Panc1 (cell line): ENCODE measurements at regions of chr15 and their contacts with region 1.

Region 1: DNA sequence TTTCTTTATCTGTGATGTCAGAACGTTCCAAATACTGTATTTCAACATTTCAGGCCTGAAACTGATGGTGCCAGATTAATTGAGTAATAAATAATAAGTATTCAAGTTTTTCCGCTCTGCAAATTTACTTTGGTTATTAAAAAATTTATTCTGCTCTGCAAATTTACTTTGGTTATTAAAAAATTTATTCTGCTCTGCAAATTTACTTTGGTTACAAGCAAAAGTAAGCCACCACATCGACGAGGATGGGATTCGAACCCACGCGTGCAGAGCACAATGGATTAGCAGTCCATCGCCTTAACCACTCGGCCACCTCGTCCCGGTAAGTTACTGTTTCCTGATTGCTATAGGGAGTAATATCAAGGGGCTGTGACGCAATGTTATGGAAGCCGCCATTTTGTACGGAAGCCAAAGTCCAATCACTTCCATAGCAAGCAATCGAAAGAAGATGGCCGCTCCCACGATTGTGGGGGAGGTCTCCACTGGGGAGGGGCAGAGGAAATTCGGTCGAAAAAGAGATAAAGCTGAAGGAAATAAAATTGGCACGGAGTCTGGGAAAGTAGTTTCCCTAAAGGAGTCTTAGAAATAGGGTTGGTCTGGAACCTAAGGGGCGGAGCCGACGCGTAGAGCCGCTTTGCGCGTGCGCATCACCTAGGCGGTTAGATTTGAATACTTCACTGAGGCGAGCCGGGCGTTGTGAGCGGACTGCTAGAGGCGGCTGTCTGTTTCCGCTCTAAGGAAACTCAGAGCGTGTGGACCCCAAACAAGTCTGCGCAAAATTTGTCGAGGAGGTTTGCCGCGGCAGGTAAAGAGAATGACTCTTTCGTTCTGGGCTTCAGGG is at the start of gene KNL1:
- DNase-seq: peak; percentile 99
- ATAC-seq: peak; percentile 88
- H3K4me3 ChIP-seq: peak within 1 kb of the TSS; percentile 68 to 77
- H3K27ac ChIP-seq: peak within 1 kb of the TSS; percentile 97
- H3K4me1 ChIP-seq: peaks cover 29% of the 10 kb centered on the region
- H3K27me3 ChIP-seq: no peaks in the 10 kb centered on the region
- CTCF ChIP-seq: no peak
- total RNA-seq, gene KNL1: 28.9 TPM

Region 2: GRCh38 chr15:40440743-40441564 is 152.9 kb before region 1 on chr15 and contains the start of gene BAHD1:
- CTCF ChIA-PET with region 1: no interaction called
- POLR2A ChIA-PET with region 1: interaction called, 10 read pairs
- in situ Hi-C with region 1: no loop called
- intact Hi-C with region 1: no loop called
- DNase-seq: peak; percentile 54
- ATAC-seq: peak; percentile 86
- H3K4me3 ChIP-seq: peak within 1 kb of the TSS; percentile 65 to 80
- H3K27ac ChIP-seq: peak within 1 kb of the TSS; percentile 91
- H3K4me1 ChIP-seq: peaks cover 66% of the 10 kb centered on the region
- H3K27me3 ChIP-seq: no peaks in the 10 kb centered on the region
- CTCF ChIP-seq: peak; percentile 52; the same call in 1 of the 2 replicates
- total RNA-seq, gene BAHD1: 40.6 TPM

Region 3: DNA sequence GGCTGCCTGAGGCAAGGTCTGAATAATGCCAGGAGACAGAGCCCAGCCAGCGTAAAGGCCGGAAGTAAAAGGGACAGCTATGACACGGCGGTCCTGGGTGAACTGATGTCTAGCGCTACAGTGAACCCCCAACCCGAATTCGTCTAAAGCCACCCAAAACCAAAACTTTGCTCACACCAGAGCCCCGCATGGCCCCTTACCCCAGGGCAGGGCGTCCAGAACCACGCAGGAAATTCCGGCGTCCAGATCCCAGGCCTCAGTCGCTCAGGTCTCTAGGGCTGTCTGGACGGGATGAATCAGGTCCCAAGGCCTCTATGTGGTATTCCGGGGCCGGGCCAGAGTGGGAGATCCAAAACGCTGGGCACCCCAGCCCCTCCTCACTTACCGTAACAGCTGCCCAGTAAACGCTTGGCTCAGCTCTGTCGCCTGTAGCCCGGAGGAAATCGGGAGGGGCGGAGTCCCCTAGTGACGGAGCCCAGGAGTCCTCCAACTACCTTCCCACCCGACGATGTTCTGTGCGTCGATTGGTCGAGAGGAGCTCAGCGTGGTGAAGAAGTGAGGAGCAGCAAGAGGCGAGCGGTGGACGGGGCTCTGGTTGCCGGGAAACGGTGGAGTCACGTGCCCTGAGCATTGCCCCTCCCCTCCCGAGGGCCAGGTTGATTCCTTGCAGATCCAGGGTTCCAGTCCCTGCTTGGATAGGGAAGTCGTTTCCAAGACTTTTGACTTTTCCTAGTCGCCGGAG is 29.0 kb before region 1 on chr15 and contains the start of gene CCDC32:
- CTCF ChIA-PET with region 1: interaction called, 17 read pairs
- POLR2A ChIA-PET with region 1: interaction called, 11 read pairs
- in situ Hi-C with region 1: no loop called
- intact Hi-C with region 1: no loop called
- DNase-seq: peak; percentile 96
- ATAC-seq: peak; percentile 98
- H3K4me3 ChIP-seq: peak within 1 kb of the TSS; percentile 78 to 95
- H3K27ac ChIP-seq: peak within 1 kb of the TSS; percentile 92
- H3K4me1 ChIP-seq: peaks cover 4% of the 10 kb centered on the region; the same call in 1 of the 2 replicates
- H3K27me3 ChIP-seq: no peaks in the 10 kb centered on the region
- CTCF ChIP-seq: no peak
- total RNA-seq, gene CCDC32: 29.8 TPM

Region 4: DNA sequence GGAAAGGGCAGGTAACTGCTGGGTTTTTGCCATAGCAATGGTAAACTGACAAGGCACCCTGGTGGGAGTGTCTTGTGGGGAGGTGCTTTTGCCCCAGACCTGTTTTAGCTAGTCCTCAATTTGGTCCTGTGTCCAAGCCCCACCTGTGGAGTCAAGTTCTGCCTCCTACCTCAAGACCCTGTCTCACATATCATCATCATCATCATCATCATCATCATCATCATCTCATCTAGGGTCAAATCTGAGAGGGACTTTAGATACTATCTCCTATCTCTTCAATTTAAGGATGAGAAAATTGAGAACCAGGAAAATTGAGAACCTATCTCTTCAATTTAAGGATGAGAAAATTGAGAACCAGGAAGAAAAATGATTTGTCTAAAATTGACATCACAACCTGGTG is 10.1 kb after region 1 on chr15:
- CTCF ChIA-PET with region 1: interaction called, 12 read pairs
- POLR2A ChIA-PET with region 1: no interaction called
- in situ Hi-C with region 1: no loop called
- intact Hi-C with region 1: no loop called
- DNase-seq: no peak
- ATAC-seq: no peak
- H3K4me3 ChIP-seq: no peak overlapping the region
- H3K27ac ChIP-seq: no peak overlapping the region
- H3K4me1 ChIP-seq: no peaks in the 10 kb centered on the region
- H3K27me3 ChIP-seq: no peaks in the 10 kb centered on the region
- CTCF ChIP-seq: no peak

Region 5: GRCh38 chr15:40633143-40633542 is 39.3 kb after region 1 on chr15:
- CTCF ChIA-PET with region 1: interaction called, 12 read pairs
- POLR2A ChIA-PET with region 1: no interaction called
- in situ Hi-C with region 1: no loop called
- intact Hi-C with region 1: no loop called
- DNase-seq: no peak
- ATAC-seq: peak; percentile 75
- H3K4me3 ChIP-seq: no peak overlapping the region
- H3K27ac ChIP-seq: no peak overlapping the region
- H3K4me1 ChIP-seq: peaks cover 3% of the 10 kb centered on the region; the same call in 1 of the 2 replicates
- H3K27me3 ChIP-seq: no peaks in the 10 kb centered on the region
- CTCF ChIP-seq: no peak

Region 6: DNA sequence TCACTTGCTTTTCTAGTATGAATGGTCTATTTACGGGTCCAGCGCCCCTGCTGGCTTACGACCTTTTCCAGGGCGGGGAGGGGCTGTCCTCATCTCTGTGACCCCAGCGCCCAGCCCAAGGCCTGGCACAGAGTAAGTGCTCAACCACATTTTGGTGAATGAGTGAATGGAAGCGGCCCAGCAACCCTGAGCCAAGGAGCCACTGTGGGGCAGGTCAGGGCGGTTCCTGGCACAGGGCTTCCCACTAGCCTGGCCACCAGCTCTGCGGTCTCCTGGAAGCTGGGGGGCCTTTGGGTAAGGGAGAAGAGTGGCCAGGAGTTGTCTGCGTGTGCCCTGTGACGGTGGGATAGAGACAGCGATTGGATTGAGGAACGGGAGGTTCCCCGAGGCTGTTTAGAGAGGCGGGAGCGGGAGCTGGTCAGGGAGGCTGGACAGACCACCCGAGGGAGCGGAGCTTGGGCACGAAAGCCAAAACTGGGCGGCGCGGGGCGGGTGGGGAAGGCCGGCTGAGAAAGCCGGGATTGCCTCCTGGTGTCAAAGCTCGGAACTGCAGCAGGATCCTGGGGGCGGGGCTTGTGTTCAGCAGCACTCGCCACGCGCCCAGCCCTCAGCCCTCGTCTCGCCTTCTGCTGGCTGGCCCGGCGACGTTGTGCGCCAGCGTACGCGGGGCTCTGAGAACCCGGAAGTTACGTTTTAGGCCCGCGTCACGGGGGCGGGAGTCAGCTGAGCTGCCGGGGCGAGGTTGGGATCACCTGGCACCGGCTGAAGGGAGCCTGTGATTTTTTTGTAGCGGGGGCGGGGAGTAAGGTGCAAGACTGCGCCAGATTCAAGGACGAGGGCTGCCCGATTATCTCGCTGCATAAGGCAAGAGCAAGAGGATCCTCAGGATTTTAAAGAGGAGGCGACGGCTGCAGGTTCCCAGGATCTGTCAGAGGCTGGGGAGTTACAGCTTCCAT is 300.2 kb after region 1 on chr15 and contains the start of gene VPS18:
- CTCF ChIA-PET with region 1: no interaction called
- POLR2A ChIA-PET with region 1: interaction called, 10 read pairs
- in situ Hi-C with region 1: no loop called
- intact Hi-C with region 1: no loop called
- DNase-seq: peak; percentile 82
- ATAC-seq: peak; percentile 97
- H3K4me3 ChIP-seq: peak within 1 kb of the TSS; percentile 94 to 97
- H3K27ac ChIP-seq: peak within 1 kb of the TSS; percentile 90
- H3K4me1 ChIP-seq: peaks cover 9% of the 10 kb centered on the region
- H3K27me3 ChIP-seq: no peaks in the 10 kb centered on the region
- CTCF ChIP-seq: peak; percentile 97
- total RNA-seq, gene VPS18: 46.7 TPM

Region 7: DNA sequence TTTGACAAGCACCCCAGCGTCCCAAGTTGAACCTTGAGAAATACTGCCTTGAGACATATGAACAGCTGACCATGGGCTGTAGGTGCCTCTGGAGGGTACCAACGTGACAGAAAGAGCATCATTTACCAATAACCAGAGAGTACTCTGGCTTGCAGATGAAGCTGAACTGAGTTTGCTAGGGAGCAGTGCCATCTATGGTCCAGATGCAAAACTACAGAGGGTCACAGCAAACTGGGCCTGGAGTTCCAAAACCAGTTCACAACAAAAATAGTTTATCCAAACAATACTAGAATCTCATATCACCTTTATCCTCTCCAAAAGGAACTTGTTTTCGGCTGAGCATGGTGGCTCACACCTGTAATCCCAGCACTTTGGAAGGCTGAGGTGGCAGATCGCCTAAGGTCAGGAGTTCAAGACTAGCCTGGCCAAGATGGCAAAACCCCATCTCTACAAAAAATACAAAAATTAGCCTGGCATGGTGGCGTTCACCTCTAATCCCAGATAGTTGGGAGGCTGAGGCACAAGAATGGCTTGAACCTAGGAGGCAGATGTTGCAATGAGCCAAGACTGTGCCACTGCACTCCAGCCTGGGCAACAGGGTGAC is 428.8 kb after region 1 on chr15:
- CTCF ChIA-PET with region 1: no interaction called
- POLR2A ChIA-PET with region 1: no interaction called
- in situ Hi-C with region 1: no loop called
- intact Hi-C with region 1: no loop called
- DNase-seq: peak; percentile 56
- ATAC-seq: peak; percentile 89
- H3K4me3 ChIP-seq: no peak overlapping the region
- H3K27ac ChIP-seq: no peak overlapping the region
- H3K4me1 ChIP-seq: no peaks in the 10 kb centered on the region
- H3K27me3 ChIP-seq: no peaks in the 10 kb centered on the region
- CTCF ChIP-seq: peak; percentile 80